Right ventricle myocardium inferior (tissue), 1 donor: ENCODE measurements at regions of chr6 and their contacts with region 1.

Region 1: GRCh38 chr6:70369332-70369950 is 43.9 kb upstream of the FAM135A start:
- DNase-seq: peak; percentile 64
- ATAC-seq: peak; percentile 60

Region 2: DNA sequence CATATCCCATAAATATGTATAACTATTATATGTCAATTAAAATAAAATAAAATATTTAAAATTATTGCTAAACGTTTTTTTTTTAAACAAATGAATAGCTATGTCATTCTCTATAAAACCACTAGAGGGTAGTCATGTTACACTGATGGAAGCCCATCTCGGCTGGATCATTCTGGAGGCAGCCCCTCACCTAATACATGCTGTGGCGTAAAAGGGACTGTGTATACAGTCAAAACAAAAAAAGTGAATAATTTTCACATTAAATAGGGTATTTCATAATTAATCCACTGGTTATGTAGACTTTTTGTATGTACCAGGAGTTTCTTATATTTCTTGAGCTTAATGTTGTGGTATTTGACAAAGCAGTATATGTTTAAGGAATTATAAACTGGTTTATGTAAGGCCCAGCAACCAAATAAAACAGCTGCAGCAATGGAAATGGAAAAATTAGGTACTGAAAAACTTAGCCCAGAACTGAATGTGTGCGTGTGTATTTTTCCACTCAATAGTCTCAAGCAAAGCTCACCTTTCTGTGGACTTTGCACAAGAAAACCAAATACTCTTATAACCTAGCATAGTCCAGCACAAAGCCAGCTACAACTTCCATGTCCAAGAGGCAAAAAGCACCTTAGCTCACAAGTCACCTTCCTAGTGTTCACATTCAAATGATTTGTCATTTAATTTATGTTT is 148.3 kb before region 1 on chr6:
- intact Hi-C with region 1: loop called (anchors 2 kb)
- DNase-seq: no peak
- ATAC-seq: no peak

Region 3: GRCh38 chr6:70310063-70310694 is 59.3 kb before region 1 on chr6:
- intact Hi-C with region 1: loop called (anchors 1 kb)
- DNase-seq: no peak
- ATAC-seq: no peak

Region 4: DNA sequence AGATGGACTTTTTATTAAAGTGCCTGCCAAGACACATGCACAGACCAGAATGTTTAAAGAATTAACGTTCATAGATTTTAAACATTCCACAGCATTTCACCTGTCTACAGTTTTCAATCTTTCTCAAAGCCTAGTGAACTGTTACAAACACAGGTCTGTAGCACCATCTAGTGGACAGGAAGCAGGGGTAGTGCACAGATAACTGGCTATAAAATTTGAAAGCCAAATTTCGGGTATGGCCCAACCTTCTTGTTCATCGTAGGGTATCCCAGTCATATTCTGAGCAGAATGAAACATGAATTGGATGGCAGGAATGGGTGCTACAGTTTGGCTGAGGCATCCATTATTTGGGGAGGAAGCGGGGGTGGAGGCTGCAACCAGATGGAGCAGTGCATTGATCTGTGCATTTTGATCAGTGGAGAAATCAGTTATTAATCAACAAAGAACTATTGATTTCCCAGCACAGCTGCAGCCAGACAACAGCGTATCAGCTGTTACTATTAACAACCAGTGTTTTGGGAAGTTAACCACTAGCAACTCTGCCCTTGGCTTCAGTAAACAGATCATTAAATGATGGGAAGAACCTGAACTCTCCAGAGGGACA is 643.5 kb after region 1 on chr6:
- intact Hi-C with region 1: loop called (anchors 10 kb)
- DNase-seq: no peak
- ATAC-seq: no peak